GM12878 (cell line): ENCODE measurements at regions of chr4 and their contacts with region 1.

Region 1: DNA sequence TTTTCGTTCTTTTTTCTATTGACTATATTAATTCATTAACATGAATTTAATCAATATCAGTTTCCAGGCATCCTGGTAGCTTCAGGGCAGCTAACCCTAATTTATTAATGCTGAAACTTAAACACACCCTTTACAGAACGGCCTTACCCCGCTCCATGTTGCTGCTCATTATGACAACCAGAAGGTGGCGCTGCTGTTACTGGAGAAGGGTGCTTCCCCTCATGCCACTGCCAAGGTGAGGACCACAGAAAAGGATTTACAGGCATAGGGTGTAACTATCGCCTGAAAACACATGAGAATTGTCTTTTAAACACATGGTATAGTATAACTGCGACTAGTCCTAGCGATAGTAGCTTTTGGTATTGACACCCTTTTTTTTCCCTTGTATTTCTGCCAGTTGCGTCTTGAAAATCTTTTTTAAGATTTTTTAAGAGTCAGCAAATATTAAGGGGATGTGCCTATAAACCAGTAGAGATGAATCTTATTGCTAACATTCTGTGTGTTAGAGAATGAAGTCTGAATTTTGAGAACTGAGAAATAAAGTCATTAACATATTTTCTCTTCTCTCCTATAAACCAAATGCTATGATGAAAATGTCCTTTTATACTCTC is 229.0 kb downstream of the ANK2 start:
- DNase-seq: peak; percentile 23
- ATAC-seq: peak; percentile 100
- H3K4me3 ChIP-seq: no peak overlapping the region
- H3K27ac ChIP-seq: no peak overlapping the region
- H3K4me1 ChIP-seq: no peaks in the 10 kb centered on the region
- H3K27me3 ChIP-seq: no peaks in the 10 kb centered on the region
- CTCF ChIP-seq: peak; percentile 86 to 88 (median 88)
- EP300 ChIP-seq: no peak
- POLR2A ChIP-seq: no peak
- RAD21 ChIP-seq: peak; percentile 88

Region 2: DNA sequence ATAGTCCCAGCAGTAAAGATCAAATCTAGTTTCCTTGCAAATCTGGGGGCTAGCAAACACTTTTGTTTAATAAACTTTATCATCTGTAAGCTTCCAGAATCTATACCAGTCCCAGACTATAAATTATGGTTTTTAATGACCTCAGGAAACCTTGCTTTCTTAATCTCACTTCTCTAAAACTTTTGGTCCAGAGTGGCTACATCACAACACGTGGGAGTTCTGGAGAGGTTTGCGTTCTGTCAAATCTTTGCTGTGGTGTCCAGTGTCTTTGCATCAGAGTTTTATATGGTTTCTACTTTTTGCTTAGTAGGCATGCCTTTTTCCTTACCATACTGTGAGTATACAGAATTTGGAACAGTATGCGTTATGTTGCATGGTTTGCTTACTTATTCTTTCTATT is 35.1 kb before region 1 on chr4:
- CTCF ChIA-PET with region 1: no interaction called
- POLR2A ChIA-PET with region 1: no interaction called
- RAD21 ChIA-PET with region 1: no interaction called
- SMC1A ChIA-PET with region 1: no interaction called
- in situ Hi-C with region 1: no loop called
- intact Hi-C with region 1: no loop called
- DNase-seq: no peak
- ATAC-seq: peak; percentile 57
- H3K4me3 ChIP-seq: no peak overlapping the region
- H3K27ac ChIP-seq: no peak overlapping the region
- H3K4me1 ChIP-seq: no peaks in the 10 kb centered on the region
- H3K27me3 ChIP-seq: no peaks in the 10 kb centered on the region
- CTCF ChIP-seq: no peak
- EP300 ChIP-seq: no peak
- POLR2A ChIP-seq: no peak
- RAD21 ChIP-seq: no peak

Region 3: DNA sequence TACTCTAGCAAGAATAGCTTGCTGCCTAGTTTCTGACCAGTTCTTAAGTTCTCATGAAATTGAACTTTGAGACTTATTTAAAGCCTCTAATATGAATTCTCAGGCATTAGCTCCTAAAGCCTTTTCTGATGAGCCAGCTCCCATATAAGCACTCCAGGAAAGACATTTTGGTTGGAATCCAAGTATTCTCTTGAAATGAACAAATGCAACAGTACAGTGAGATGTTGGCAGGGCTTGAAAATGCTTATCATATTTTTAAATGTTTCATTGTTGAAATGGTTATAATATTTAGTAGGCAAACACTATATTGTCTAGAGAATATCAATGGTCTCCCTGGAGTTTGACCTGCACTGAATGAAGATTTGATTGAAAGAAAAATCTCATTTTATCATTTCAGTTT is 11.3 kb after region 1 on chr4:
- CTCF ChIA-PET with region 1: interaction called, 26 read pairs
- POLR2A ChIA-PET with region 1: no interaction called
- RAD21 ChIA-PET with region 1: no interaction called
- SMC1A ChIA-PET with region 1: interaction called, 6 read pairs
- in situ Hi-C with region 1: no loop called
- intact Hi-C with region 1: no loop called
- DNase-seq: no peak
- ATAC-seq: no peak
- H3K4me3 ChIP-seq: no peak overlapping the region
- H3K27ac ChIP-seq: no peak overlapping the region
- H3K4me1 ChIP-seq: no peaks in the 10 kb centered on the region
- H3K27me3 ChIP-seq: no peaks in the 10 kb centered on the region
- CTCF ChIP-seq: no peak
- EP300 ChIP-seq: no peak
- POLR2A ChIP-seq: no peak
- RAD21 ChIP-seq: no peak

Region 4: GRCh38 chr4:113328514-113328913 is 50.1 kb after region 1 on chr4:
- CTCF ChIA-PET with region 1: interaction called, 4 read pairs
- POLR2A ChIA-PET with region 1: no interaction called
- RAD21 ChIA-PET with region 1: no interaction called
- SMC1A ChIA-PET with region 1: no interaction called
- in situ Hi-C with region 1: no loop called
- intact Hi-C with region 1: loop called (anchors 1 kb)
- DNase-seq: no peak
- ATAC-seq: peak; percentile 85
- H3K4me3 ChIP-seq: no peak overlapping the region
- H3K27ac ChIP-seq: no peak overlapping the region
- H3K4me1 ChIP-seq: no peaks in the 10 kb centered on the region
- H3K27me3 ChIP-seq: no peaks in the 10 kb centered on the region
- CTCF ChIP-seq: peak; percentile 30 to 55 (median 44); a peak in 4 of 6 replicates
- EP300 ChIP-seq: no peak
- POLR2A ChIP-seq: no peak
- RAD21 ChIP-seq: peak; percentile 29; the same call in 1 of the 2 replicates

Region 5: GRCh38 chr4:113355550-113356371 is 77.3 kb after region 1 on chr4:
- CTCF ChIA-PET with region 1: interaction called, 6 read pairs
- POLR2A ChIA-PET with region 1: no interaction called
- RAD21 ChIA-PET with region 1: interaction called, 3 read pairs
- SMC1A ChIA-PET with region 1: interaction called, 6 read pairs
- in situ Hi-C with region 1: no loop called
- intact Hi-C with region 1: loop called (anchors 2 kb)
- DNase-seq: peak; percentile 98
- ATAC-seq: peak; percentile 98
- H3K4me3 ChIP-seq: peak overlapping the region; percentile 8; the same call in 1 of the 2 replicates
- H3K27ac ChIP-seq: peak overlapping the region; percentile 64
- H3K4me1 ChIP-seq: peaks cover 14% of the 10 kb centered on the region
- H3K27me3 ChIP-seq: no peaks in the 10 kb centered on the region
- CTCF ChIP-seq: peak; percentile 43 to 65 (median 45); a peak in 5 of 6 replicates
- EP300 ChIP-seq: peak; percentile 70 to 79
- POLR2A ChIP-seq: no peak
- RAD21 ChIP-seq: peak; percentile 36; the same call in 1 of the 2 replicates

Region 6: DNA sequence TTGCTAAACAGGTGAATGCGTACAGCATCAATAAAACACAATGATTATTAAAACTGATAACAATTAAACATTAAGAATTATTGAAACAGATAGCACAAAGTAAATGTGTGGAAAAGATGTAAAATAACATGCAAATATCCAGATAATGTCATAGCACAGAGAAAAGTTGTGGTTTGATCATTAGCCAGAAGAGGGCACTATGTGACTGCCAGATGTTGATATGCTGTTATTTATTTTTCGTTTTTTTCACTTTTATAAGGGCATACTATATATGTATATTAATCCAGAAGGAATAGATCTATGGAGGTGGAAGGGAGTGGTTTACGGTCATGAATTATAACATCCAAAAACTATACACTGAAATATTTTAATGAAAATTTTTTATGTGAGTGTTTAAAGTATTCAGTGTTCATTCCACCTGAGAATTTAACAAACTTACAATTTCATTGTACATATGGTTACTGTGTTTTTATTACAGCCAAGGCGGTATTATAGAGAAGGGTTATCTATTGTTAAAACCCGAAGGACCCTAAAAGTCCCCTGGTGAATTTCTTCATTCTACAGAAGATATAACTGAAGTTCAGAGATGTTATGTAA is 1108.3 kb after region 1 on chr4:
- CTCF ChIA-PET with region 1: interaction called, 3 read pairs
- POLR2A ChIA-PET with region 1: no interaction called
- RAD21 ChIA-PET with region 1: no interaction called
- SMC1A ChIA-PET with region 1: no interaction called
- in situ Hi-C with region 1: no loop called
- intact Hi-C with region 1: loop called (anchors 10 kb)
- DNase-seq: peak; percentile 5
- ATAC-seq: peak; percentile 67
- H3K4me3 ChIP-seq: no peak overlapping the region
- H3K27ac ChIP-seq: no peak overlapping the region
- H3K4me1 ChIP-seq: no peaks in the 10 kb centered on the region
- H3K27me3 ChIP-seq: no peaks in the 10 kb centered on the region
- CTCF ChIP-seq: peak; percentile 49 to 76 (median 53)
- EP300 ChIP-seq: no peak
- POLR2A ChIP-seq: no peak
- RAD21 ChIP-seq: peak; percentile 92